ENCODE measurements at regions of chr17 and their contacts with region 1.

Region 1: GRCh38 chr17:17313350-17313991 is 10.3 kb downstream of the NT5M start:
- DNase-seq: peak; percentile 45
- H3K4me3 ChIP-seq: no peak overlapping the region
- H3K27ac ChIP-seq: no peak overlapping the region
- H3K4me1 ChIP-seq: no peaks in the 10 kb centered on the region
- H3K27me3 ChIP-seq: no peaks in the 10 kb centered on the region
- CTCF ChIP-seq: peak; percentile 76 to 89

Region 2: DNA sequence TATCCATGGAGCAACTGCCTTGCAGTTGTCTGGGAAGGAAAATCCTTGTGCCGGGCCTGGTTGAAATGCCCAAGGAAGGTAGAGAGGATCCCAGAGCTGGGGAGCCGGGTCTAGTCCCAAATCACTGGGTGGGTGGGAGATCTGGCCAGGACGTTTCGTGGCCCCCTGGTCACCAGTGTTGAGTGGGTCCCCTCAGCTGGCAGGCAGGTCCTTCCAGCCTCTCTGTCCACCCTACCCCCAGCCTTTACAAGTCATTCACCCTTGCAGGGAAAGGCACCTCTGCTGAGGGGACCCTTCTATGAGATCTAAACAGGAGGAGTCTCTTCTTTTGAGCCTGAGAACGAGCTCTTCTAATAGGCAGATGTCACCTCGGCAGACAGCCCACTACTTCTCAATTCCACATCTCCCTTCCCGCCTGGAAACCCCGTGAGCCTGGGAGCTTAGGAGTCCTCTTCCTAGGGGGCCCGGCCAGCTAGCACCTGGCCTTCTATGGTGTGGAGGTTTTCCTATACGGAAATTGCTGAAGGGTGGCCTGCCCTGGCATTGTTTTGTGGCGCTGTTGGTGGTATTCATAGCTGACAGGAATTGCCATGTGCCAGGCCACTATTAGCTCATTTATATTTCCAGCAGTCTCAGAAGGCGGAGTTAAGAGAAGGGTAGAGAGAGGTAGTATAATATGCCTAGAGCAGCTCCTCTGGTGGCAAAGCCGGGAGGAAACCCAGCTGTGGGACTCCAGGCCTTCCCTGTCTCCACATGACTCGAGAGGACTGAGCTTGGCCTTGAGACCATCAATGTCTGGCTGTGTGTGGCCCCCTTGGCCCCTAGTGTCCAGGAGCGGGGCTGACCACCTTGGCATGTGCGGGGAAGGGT is 257.9 kb before region 1 on chr17:
- CTCF ChIA-PET with region 1: no interaction called
- dilution Hi-C with region 1: no loop called
- in situ Hi-C with region 1: no loop called
- intact Hi-C with region 1: loop called (anchors 5 kb)
- DNase-seq: peak; percentile 35
- H3K4me3 ChIP-seq: no peak overlapping the region
- H3K27ac ChIP-seq: peak overlapping the region; percentile 19
- H3K4me1 ChIP-seq: peaks cover 35% of the 10 kb centered on the region
- H3K27me3 ChIP-seq: no peaks in the 10 kb centered on the region
- CTCF ChIP-seq: peak in 1 of 2 donors; percentile 28

Region 3: GRCh38 chr17:17237026-17237799 is 76.3 kb before region 1 on chr17 and contains the start of gene FLCN:
- CTCF ChIA-PET with region 1: no interaction called
- dilution Hi-C with region 1: loop called (anchors 5 kb)
- in situ Hi-C with region 1: no loop called
- intact Hi-C with region 1: no loop called
- DNase-seq: peak; percentile 81
- H3K4me3 ChIP-seq: peak within 1 kb of the TSS; percentile 68 to 78 (median 71)
- H3K27ac ChIP-seq: peak within 1 kb of the TSS; percentile 97
- H3K4me1 ChIP-seq: peaks cover 12% of the 10 kb centered on the region
- H3K27me3 ChIP-seq: no peaks in the 10 kb centered on the region
- CTCF ChIP-seq: no peak
- total RNA-seq, gene FLCN: 41.7 to 59.0 TPM

Region 4: DNA sequence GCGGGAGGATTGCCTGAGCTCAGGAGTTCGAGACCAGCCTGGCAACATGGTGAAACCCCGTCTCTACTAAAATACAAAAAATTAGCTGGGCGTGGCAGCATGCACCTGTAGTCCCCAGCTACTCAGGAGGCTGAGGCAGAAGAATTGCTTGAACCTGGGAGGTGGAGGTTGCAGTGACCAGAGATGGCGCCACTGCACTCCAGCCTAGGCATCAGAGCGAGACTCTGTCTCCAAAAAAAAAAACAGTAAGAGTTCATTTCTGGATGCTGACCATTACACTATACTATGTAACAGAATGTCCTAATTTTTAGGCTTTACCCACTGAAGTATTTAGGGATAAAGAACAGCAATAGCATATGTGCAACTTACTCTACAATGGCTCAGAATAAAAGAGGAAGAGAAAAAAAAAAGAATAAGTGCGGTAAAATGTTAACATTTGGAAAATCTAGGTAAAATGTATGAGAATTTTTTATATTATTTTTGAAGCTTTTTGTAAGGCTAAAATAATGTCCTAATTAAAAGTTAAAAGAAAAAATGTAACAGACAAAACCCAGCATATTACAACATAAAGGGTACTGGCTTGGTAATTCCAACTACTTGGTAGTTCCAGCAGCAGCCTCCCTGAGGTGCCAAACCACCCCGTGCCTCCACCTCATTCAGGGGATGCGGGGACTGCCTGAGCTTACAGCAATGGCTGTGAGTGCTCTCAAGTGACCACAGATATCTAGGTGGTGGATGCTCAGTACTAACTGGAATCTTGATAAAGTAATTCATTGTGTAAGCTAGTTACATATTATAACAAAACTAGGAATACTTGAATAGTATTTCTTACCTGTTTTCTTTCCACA is 43.3 kb before region 1 on chr17:
- CTCF ChIA-PET with region 1: no interaction called
- dilution Hi-C with region 1: no loop called
- in situ Hi-C with region 1: no loop called
- intact Hi-C with region 1: loop called (anchors 1 kb)
- DNase-seq: no peak
- H3K4me3 ChIP-seq: no peak overlapping the region
- H3K27ac ChIP-seq: no peak overlapping the region
- H3K4me1 ChIP-seq: no peaks in the 10 kb centered on the region
- H3K27me3 ChIP-seq: no peaks in the 10 kb centered on the region
- CTCF ChIP-seq: peak; percentile 17 to 37